ENCODE measurements at regions of chr14 and their contacts with region 1.

Region 1: DNA sequence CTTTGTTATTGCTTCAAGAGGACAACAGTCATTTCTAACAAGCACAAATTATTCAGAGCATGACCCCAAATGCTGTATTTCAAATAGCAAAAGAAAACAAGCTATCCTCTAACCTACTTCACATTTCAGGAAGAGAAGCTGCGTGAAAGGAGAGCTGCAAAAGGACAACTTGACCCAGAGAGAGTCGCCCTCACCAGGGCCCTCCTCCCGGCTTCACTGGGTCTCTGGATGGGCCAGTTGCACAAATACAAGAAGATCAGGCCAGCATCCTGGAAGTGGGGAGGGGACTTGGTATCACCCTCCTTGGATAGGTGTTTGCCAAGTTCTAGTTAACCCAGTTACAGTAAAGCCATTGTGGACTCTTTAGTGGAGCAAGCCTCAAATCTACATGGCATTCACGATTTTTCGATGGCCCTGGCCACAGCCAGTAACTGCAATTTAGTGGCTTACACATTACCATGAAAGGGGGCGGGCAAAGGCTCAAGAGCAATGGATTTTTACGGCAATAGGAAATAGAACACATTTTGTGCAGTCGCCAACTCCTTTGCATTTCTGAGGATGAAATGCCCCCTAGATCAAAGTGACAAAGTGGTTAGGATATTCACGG is 166.9 kb upstream of the DIO2 start:
- DNase-seq: no peak
- ATAC-seq: no peak
- H3K4me3 ChIP-seq: no peak overlapping the region
- H3K27ac ChIP-seq: no peak overlapping the region
- H3K4me1 ChIP-seq: no peaks in the 10 kb centered on the region
- H3K27me3 ChIP-seq: no peaks in the 10 kb centered on the region
- CTCF ChIP-seq: no peak

Region 2: DNA sequence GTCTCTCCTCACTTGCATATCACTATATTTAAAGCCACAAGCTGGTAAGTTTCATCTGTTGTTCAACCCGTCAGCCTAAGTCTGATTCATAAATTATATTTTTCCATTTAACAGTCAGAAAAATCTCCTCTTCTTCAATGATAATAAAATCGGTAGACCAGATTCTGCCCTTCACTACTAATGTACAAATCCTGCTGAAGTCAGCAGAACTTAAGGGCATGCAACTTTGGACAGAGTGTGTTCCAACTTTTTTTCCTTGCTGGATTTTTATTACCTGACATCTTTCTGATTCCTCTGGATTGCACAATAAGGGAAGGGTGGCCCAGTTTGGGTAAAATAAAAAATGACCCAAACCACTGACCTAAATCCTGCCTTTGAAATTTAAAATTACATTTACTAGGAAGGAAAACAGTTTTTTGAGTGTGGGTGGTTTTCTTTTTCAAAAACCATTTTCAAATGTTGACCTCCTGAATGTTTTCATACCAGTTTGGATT is 41.5 kb before region 1 on chr14:
- intact Hi-C with region 1: loop called in 1 of 10 experiments (anchors 5 kb)
- DNase-seq: no peak
- ATAC-seq: no peak
- H3K4me3 ChIP-seq: no peak overlapping the region
- H3K27ac ChIP-seq: no peak overlapping the region
- H3K4me1 ChIP-seq: no peaks in the 10 kb centered on the region
- H3K27me3 ChIP-seq: no peaks in the 10 kb centered on the region
- CTCF ChIP-seq: no peak

Region 3: GRCh38 chr14:80726211-80726610 is 348.0 kb after region 1 on chr14:
- intact Hi-C with region 1: no loop called
- DNase-seq: no peak
- ATAC-seq: no peak
- H3K4me3 ChIP-seq: no peak overlapping the region
- H3K27ac ChIP-seq: no peak overlapping the region
- H3K4me1 ChIP-seq: no peaks in the 10 kb centered on the region
- H3K27me3 ChIP-seq: no peaks in the 10 kb centered on the region
- CTCF ChIP-seq: no peak